Gastrocnemius medialis (tissue), 4 donors: ENCODE measurements at regions of chr4 and their contacts with region 1.

Region 1: GRCh38 chr4:89410687-89411086 is 103.1 kb upstream of the GPRIN3 start:
- DNase-seq: no peak
- ATAC-seq: no peak
- H3K4me3 ChIP-seq: no peak overlapping the region
- H3K27ac ChIP-seq: peak overlapping the region in 2 of 4 donors; percentile 1 to 48
- H3K4me1 ChIP-seq: no peaks in the 10 kb centered on the region
- H3K27me3 ChIP-seq: no peaks in the 10 kb centered on the region
- CTCF ChIP-seq: no peak
- POLR2A ChIP-seq: no peak

Region 2: DNA sequence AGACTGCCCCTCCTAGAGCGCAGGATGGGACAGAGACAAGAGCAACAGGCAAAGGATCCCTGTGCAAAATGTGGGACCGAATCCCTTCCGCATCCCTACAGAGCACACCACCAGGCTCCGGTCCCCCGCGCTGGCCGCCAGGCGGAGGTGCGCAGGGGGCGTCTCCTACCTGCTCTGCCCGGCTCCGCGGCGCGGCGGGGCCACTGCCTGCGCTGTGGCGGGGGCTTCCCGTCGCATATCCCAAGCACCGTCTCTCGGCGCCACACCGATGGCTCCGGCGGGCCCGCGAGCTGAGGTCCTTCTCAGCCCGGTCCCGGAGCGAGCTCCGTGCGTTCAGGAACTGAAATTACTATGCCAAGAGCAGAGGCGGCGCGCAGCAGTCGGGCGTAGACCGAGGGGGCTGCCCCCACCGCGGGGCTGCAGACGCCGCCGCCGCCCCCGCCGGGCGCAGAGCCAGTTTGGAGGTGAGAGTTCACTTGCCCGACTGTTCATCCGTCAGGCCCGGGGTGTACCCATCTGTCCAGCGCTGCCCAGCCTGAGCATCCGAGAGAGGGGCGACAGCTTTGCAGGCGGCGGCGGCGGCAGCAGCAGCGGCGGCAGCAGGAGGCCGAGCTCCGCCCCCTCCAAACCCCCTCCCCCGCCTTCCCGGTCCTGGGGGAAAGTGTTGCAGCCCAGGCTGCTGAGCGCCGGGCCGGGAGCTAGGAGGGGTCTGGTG is 103.1 kb before region 1 on chr4 and contains the start of gene GPRIN3:
- in situ Hi-C with region 1: no loop called
- intact Hi-C with region 1: loop called (anchors 10 kb)
- DNase-seq: no peak
- ATAC-seq: no peak
- H3K4me3 ChIP-seq: peak within 1 kb of the TSS; percentile 54 to 74 (median 58)
- H3K27ac ChIP-seq: peak within 1 kb of the TSS; percentile 34 to 56 (median 39)
- H3K4me1 ChIP-seq: no peaks in the 10 kb centered on the region
- H3K27me3 ChIP-seq: peaks cover 6 to 22% (median 14%) of the 10 kb centered on the region in 3 donors
- CTCF ChIP-seq: no peak
- POLR2A ChIP-seq: no peak
- total RNA-seq, gene GPRIN3: 1.2 to 3.1 (median 1.8) TPM

Region 3: GRCh38 chr4:89558147-89558546 is 147.5 kb after region 1 on chr4:
- in situ Hi-C with region 1: no loop called
- intact Hi-C with region 1: no loop called
- DNase-seq: no peak
- ATAC-seq: no peak
- H3K4me3 ChIP-seq: no peak overlapping the region
- H3K27ac ChIP-seq: no peak overlapping the region
- H3K4me1 ChIP-seq: no peaks in the 10 kb centered on the region
- H3K27me3 ChIP-seq: no peaks in the 10 kb centered on the region
- CTCF ChIP-seq: no peak
- POLR2A ChIP-seq: no peak